ENCODE measurements at regions of chr11 and their contacts with region 1.

Region 1: GRCh38 chr11:1744137-1744886 is 6.1 kb downstream of the IFITM10 start:
- DNase-seq: peak; percentile 83 to 85
- ATAC-seq: peak; percentile 37 to 65
- H3K4me3 ChIP-seq: no peak overlapping the region
- H3K27ac ChIP-seq: peak overlapping the region; percentile 59 to 81 (median 72)
- H3K4me1 ChIP-seq: peaks cover 29 to 40% of the 10 kb centered on the region in 2 donors
- H3K27me3 ChIP-seq: no peaks in the 10 kb centered on the region
- CTCF ChIP-seq: no peak
- POLR2A ChIP-seq: no peak

Region 2: GRCh38 chr11:1717745-1718144 is 26.6 kb before region 1 on chr11:
- in situ Hi-C with region 1: no loop called
- intact Hi-C with region 1: loop called (anchors 2 kb)
- DNase-seq: peak in 1 of 2 donors; percentile 64
- ATAC-seq: peak; percentile 79 to 87
- H3K4me3 ChIP-seq: no peak overlapping the region
- H3K27ac ChIP-seq: peak overlapping the region in 3 of 4 donors; percentile 39 to 68 (median 55)
- H3K4me1 ChIP-seq: peaks cover 7 to 9% of the 10 kb centered on the region in 2 donors
- H3K27me3 ChIP-seq: no peaks in the 10 kb centered on the region
- CTCF ChIP-seq: no peak
- POLR2A ChIP-seq: no peak

Measured in gastrocnemius medialis (tissue), 4 donors.